ENCODE measurements at regions of chr2 and their contacts with region 1.

Region 1: DNA sequence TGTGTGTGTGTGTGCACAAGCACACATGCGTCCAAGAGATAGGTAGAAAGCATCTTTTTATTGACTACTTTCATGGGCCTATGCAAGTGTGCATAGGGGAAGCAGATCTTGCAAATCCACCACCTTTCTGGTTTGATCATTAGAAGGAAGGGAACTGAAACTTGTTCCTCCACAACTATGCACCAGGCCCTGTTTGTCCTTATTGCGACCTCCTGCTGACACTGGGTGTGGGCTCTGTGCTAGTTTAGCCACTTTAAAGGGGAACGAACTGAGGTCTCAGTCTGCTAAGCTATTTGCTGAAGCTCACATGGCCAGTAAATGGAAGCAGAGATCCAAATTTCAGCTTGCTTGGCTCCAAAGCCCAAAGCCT is 32.1 kb upstream of the INSIG2 start:
- DNase-seq: peak; percentile 86
- ATAC-seq: peak; percentile 91
- H3K4me3 ChIP-seq: peak overlapping the region in 2 of 5 experiments; percentile 16 to 22
- H3K4me3 Mint-ChIP-seq: peak overlapping the region; percentile 80
- H3K27ac ChIP-seq: peak overlapping the region; percentile 67 to 88
- H3K27ac Mint-ChIP-seq: peak overlapping the region; percentile 98
- H3K4me1 ChIP-seq: peaks cover 52 to 63% of the 10 kb centered on the region in 2 donors
- H3K4me1 Mint-ChIP-seq: peaks cover 60% of the 10 kb centered on the region
- H3K27me3 ChIP-seq: no peaks in the 10 kb centered on the region
- H3K27me3 Mint-ChIP-seq: no peaks in the 10 kb centered on the region
- CTCF ChIP-seq: no peak

Region 2: GRCh38 chr2:118013724-118014491 is 42.2 kb before region 1 on chr2 and contains the start of gene CCDC93:
- CTCF ChIA-PET with region 1: interaction called, 7 read pairs
- POLR2A ChIA-PET with region 1: no interaction called
- intact Hi-C with region 1: loop called (anchors 1 kb)
- DNase-seq: peak; percentile 94
- ATAC-seq: peak; percentile 86
- H3K4me3 ChIP-seq: peak within 1 kb of the TSS; percentile 82 to 99 (median 96)
- H3K4me3 Mint-ChIP-seq: peak within 1 kb of the TSS; percentile 97
- H3K27ac ChIP-seq: peak within 1 kb of the TSS; percentile 90 to 97
- H3K27ac Mint-ChIP-seq: peak within 1 kb of the TSS; percentile 92
- H3K4me1 ChIP-seq: peaks cover 21 to 24% of the 10 kb centered on the region in 2 donors
- H3K4me1 Mint-ChIP-seq: peaks cover 34% of the 10 kb centered on the region
- H3K27me3 ChIP-seq: peaks cover 0 to 9% (median 0%) of the 10 kb centered on the region in 4 experiments
- H3K27me3 Mint-ChIP-seq: peaks cover 9% of the 10 kb centered on the region
- CTCF ChIP-seq: no peak
- total RNA-seq, gene CCDC93: 79.6 and 86.7 TPM in 2 replicates

Region 3: GRCh38 chr2:118154176-118154575 is 98.0 kb after region 1 on chr2:
- CTCF ChIA-PET with region 1: no interaction called
- POLR2A ChIA-PET with region 1: no interaction called
- intact Hi-C with region 1: no loop called
- DNase-seq: no peak
- ATAC-seq: no peak
- H3K4me3 ChIP-seq: no peak overlapping the region
- H3K4me3 Mint-ChIP-seq: no peak overlapping the region
- H3K27ac ChIP-seq: no peak overlapping the region
- H3K27ac Mint-ChIP-seq: no peak overlapping the region
- H3K4me1 ChIP-seq: no peaks in the 10 kb centered on the region
- H3K4me1 Mint-ChIP-seq: no peaks in the 10 kb centered on the region
- H3K27me3 ChIP-seq: peaks cover 0 to 14% (median 4%) of the 10 kb centered on the region in 4 experiments
- H3K27me3 Mint-ChIP-seq: peaks cover 36% of the 10 kb centered on the region
- CTCF ChIP-seq: no peak

Measured in B cell (primary cell).